ENCODE measurements at regions of chr19 and their contacts with region 1.

Region 1: GRCh38 chr19:48588670-48589399 is 17.7 kb upstream of the SPACA4 start:
- DNase-seq: peak; percentile 98

Region 2: DNA sequence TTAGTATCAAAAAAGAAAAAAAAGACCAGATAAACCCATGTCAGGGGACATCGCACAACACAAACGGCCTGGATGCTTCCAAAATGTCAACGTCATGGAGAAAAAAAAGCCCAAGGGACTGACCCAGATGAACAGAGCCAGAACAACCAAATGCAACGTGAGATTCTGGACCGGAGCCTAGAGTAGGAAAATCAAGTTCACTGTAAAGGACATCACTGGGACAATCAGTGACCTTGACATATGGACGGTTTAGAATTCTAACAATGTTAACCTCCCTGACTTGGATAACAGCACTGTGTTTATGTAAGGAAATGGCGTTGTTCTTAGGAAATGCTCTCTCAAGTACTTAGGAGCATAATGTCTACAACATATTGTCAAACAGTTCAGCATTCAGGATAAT is 278.6 kb before region 1 on chr19:
- intact Hi-C with region 1: loop called in 1 of 2 experiments (anchors 10 kb)
- DNase-seq: no peak

Region 3: GRCh38 chr19:48492925-48493717 is 95.7 kb before region 1 on chr19:
- intact Hi-C with region 1: loop called (anchors 5 to 10 kb)
- DNase-seq: peak; percentile 99

Region 4: GRCh38 chr19:48568345-48568886 is 20.4 kb before region 1 on chr19:
- intact Hi-C with region 1: loop called in 1 of 2 experiments (anchors 2 kb)
- DNase-seq: peak; percentile 96